Gastrocnemius medialis (tissue), 4 donors: ENCODE measurements at regions of chr2 and their contacts with region 1.

Region 1: GRCh38 chr2:217510771-217511291 is 492.0 kb downstream of the TNS1 start:
- DNase-seq: peak; percentile 25 to 60
- ATAC-seq: peak; percentile 96 to 98
- H3K4me3 ChIP-seq: no peak overlapping the region
- H3K27ac ChIP-seq: no peak overlapping the region
- H3K4me1 ChIP-seq: no peaks in the 10 kb centered on the region
- H3K27me3 ChIP-seq: no peaks in the 10 kb centered on the region
- CTCF ChIP-seq: peak; percentile 51 to 72 (median 69)
- POLR2A ChIP-seq: no peak

Region 2: DNA sequence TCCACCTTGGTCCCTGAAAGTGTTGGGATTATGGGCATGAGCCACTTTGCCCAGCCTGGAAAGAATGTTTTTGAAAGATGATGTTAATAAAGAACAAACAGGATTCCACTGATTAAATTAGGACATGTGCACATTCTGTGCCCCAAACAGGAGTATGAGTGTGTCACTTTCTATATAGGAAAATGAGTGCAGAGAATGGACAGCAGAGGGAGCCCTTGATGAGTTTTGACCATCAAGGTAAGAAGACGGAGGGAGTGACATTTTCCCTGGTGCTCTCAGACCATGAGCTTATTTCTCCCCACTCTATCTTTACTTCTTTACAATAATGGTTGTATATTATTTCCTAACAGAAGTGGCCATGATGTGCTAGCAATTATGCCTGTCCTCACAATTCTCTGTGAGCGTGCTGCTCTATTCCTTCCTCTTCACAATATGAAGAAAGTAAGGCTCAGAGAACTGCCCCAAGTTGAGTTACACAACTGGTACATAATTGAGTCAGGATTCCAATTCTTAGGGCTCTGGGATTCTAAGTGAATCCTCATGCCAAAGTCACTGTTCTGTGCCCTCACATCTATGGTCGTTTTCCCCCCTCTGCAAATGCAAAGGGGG is 991.6 kb before region 1 on chr2:
- in situ Hi-C with region 1: loop called in 3 of 4 experiments (anchors 25 kb)
- intact Hi-C with region 1: loop called (anchors 1 kb)
- DNase-seq: peak; percentile 36 to 48
- ATAC-seq: peak; percentile 82 to 93
- H3K4me3 ChIP-seq: no peak overlapping the region
- H3K27ac ChIP-seq: no peak overlapping the region
- H3K4me1 ChIP-seq: peaks cover 0 to 4% of the 10 kb centered on the region in 2 donors
- H3K27me3 ChIP-seq: no peaks in the 10 kb centered on the region
- CTCF ChIP-seq: peak; percentile 69 to 79 (median 75)
- POLR2A ChIP-seq: no peak

Region 3: DNA sequence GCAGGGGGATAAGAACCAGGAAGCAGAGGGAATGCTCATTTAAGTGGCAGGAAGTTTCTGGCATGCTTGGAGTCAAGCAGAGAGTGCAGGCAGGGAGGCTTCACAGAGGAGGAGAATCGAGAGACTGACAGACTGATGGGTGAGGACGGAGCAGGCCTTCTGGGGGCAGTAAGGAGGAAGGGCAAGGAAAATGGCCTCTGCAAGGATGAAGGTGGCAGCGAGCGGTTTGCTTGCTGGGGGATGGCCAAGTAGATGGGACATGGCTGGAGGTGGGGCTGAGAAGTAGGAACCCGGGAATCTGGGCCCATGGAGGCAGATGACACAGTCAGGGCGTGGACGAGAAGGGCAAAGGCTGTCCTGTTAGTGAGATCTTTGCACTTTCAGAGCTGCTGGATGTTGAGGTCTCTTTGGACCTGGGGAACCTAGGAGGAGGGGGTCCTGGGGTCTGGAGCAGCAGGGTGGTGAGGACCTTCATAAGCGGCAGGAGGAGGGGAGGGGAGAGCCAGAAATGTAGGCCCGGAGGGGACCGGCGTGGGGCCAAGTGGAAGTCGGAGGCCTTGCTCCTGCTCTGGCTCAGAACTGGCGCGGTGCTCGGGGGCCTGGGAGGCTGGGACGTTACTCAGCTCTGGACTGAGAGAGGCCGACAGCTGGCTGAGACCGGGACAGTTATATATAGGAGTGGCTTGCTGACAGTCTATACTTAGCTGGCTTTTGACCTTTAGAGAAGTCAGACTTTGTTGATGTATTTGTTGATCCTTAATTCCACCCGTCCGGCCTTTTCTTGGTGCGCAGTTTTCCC is 831.4 kb before region 1 on chr2:
- in situ Hi-C with region 1: loop called in 2 of 4 experiments (anchors 5 to 10 kb)
- intact Hi-C with region 1: loop called (anchors 1 kb)
- DNase-seq: peak; percentile 84 to 92
- ATAC-seq: peak; percentile 58 to 59
- H3K4me3 ChIP-seq: peak overlapping the region in 2 of 4 donors; percentile 8 to 26
- H3K27ac ChIP-seq: peak overlapping the region; percentile 93 to 95 (median 93)
- H3K4me1 ChIP-seq: peaks cover 55 to 57% of the 10 kb centered on the region in 2 donors
- H3K27me3 ChIP-seq: no peaks in the 10 kb centered on the region
- CTCF ChIP-seq: no peak
- POLR2A ChIP-seq: peak; percentile 54 to 55

Region 4: GRCh38 chr2:216829533-216829932 is 681.3 kb before region 1 on chr2:
- in situ Hi-C with region 1: loop called in 1 of 4 experiments (anchors 25 kb)
- intact Hi-C with region 1: no loop called
- DNase-seq: peak; percentile 85 to 92
- ATAC-seq: peak; percentile 95 to 97
- H3K4me3 ChIP-seq: no peak overlapping the region
- H3K27ac ChIP-seq: peak overlapping the region; percentile 45 to 74 (median 53)
- H3K4me1 ChIP-seq: peaks cover 41 to 42% of the 10 kb centered on the region in 2 donors
- H3K27me3 ChIP-seq: no peaks in the 10 kb centered on the region
- CTCF ChIP-seq: no peak
- POLR2A ChIP-seq: no peak

Region 5: GRCh38 chr2:217166241-217166850 is 344.5 kb before region 1 on chr2:
- in situ Hi-C with region 1: loop called in 2 of 4 experiments (anchors 10 to 25 kb)
- intact Hi-C with region 1: loop called (anchors 5 kb)
- DNase-seq: no peak
- ATAC-seq: peak in 1 of 2 donors; percentile 71
- H3K4me3 ChIP-seq: no peak overlapping the region
- H3K27ac ChIP-seq: no peak overlapping the region
- H3K4me1 ChIP-seq: peaks cover 16 to 32% of the 10 kb centered on the region in 2 donors
- H3K27me3 ChIP-seq: no peaks in the 10 kb centered on the region
- CTCF ChIP-seq: peak; percentile 63 to 71 (median 64)
- POLR2A ChIP-seq: no peak

Region 6: DNA sequence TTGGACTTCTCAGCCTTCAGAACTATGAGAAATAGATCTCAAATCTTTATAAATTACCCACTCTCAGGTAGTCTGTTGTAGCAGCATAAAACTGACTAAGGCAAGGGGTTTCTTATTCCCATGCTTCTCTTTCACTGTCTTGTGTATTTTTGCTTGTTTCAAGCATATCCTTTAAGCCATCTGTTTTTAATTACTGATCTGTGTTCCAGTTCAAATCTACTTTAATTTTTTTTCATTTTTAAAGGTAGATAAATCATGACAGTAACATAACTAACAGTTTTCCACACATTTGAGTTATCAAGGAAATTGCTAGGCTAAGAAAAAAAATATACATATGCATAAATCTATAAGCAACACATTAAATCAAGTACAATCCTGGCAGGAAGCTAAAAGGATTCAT is 333.1 kb before region 1 on chr2:
- in situ Hi-C with region 1: loop called in 3 of 4 experiments (anchors 10 to 25 kb)
- intact Hi-C with region 1: no loop called
- DNase-seq: no peak
- ATAC-seq: no peak
- H3K4me3 ChIP-seq: no peak overlapping the region
- H3K27ac ChIP-seq: no peak overlapping the region
- H3K4me1 ChIP-seq: no peaks in the 10 kb centered on the region
- H3K27me3 ChIP-seq: no peaks in the 10 kb centered on the region
- CTCF ChIP-seq: no peak
- POLR2A ChIP-seq: no peak

Region 7: GRCh38 chr2:217186668-217187159 is 324.1 kb before region 1 on chr2:
- in situ Hi-C with region 1: loop called in 1 of 4 experiments (anchors 25 kb)
- intact Hi-C with region 1: no loop called
- DNase-seq: peak; percentile 37 to 68
- ATAC-seq: peak; percentile 78 to 80
- H3K4me3 ChIP-seq: no peak overlapping the region
- H3K27ac ChIP-seq: peak overlapping the region; percentile 26 to 65 (median 60)
- H3K4me1 ChIP-seq: peaks cover 7% of the 10 kb centered on the region in 2 donors
- H3K27me3 ChIP-seq: no peaks in the 10 kb centered on the region
- CTCF ChIP-seq: no peak
- POLR2A ChIP-seq: peak in 1 of 2 donors; percentile 4

Region 8: GRCh38 chr2:217753460-217754200 is 242.8 kb after region 1 on chr2:
- in situ Hi-C with region 1: no loop called
- intact Hi-C with region 1: no loop called
- DNase-seq: no peak
- ATAC-seq: no peak
- H3K4me3 ChIP-seq: no peak overlapping the region
- H3K27ac ChIP-seq: no peak overlapping the region
- H3K4me1 ChIP-seq: peaks cover 4 to 7% of the 10 kb centered on the region in 2 donors
- H3K27me3 ChIP-seq: no peaks in the 10 kb centered on the region
- CTCF ChIP-seq: no peak
- POLR2A ChIP-seq: no peak